Head of caudate nucleus (tissue), 42 donors: ENCODE measurements at regions of chr3 and their contacts with region 1.

Region 1: DNA sequence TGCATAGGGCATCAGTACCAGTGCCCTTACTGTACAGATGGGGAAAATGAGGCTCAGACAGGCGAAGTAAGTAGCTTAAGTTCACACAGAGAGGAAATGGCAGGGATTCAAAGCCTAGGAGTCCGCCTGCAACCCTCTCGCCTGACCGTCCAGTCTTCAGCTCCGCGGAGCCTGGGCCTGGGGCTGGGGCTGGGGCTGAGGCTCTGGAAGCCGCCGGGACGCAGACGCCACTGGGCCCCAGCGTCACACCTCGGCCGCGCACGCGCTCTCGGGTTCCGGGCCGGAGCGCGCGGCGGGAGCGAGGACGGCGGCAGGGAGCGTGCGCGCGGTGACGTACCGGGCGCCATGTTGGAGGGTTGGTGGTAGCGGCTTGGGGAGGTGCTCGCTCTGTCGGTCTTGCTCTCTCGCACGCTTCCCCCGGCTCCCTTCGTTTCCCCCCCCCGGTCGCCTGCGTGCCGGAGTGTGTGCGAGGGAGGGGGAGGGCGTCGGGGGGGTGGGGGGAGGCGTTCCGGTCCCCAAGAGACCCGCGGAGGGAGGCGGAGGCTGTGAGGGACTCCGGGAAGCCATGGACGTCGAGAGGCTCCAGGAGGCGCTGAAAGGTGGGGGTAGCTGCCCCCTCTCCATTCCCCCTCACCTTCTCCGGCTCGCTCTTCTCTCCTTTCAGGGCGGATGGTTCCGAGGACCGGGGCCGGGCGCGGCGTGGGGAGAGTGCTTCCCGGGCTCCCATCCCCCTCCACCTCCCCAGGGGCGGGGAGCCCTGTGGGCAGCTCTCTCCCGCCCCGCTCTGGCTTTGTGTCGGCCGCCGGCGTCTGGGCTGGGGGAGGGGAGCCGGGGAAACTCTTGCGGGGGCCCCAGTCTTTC is at the start of gene PPP4R2:
- DNase-seq: peak; percentile 52 to 94 (median 88)

Region 2: DNA sequence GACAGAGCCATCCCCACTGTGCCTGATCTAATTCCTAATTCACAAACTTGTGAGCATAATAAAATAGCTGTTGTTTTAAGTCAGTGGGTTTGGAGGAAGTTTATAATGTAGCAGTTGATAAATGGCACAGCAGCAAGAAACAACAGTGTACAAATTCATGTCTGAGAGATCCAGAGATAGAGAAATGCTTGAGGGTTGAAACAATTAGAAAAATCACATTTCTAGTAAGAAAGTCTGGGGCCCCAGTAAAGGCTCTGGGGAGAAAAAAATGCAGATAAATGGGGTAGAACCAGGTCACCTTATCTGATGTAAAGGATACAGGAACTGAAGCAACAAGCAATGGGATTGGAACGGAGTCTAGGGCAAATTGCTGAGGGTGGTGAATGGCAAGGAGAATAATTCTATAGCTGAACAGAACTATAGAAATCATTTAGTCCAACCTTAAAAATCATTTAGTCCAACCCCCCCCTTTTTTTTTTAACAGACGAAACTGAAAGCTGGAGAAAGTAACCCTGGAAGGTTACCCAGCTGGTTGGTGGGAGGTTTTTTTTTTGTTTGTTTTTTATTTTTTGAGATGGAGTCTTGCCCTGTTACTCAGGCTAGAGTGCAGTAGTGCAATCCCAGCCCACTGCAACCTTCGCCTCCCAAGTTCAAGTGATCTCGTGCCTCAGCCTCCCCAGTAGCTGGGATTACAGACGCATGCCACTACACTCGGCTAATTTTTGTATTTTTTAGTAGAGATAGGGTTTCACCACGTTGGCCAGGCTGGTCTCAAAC is 134.2 kb before region 1 on chr3:
- intact Hi-C with region 1: no loop called
- DNase-seq: no peak

Region 3: GRCh38 chr3:73056014-73056844 is 59.5 kb after region 1 on chr3:
- intact Hi-C with region 1: loop called (anchors 10 kb)
- DNase-seq: peak in 1 of 42 donors; percentile 15